ENCODE measurements at regions of chr2 and their contacts with region 1.

Region 1: GRCh38 chr2:195937176-195937575 is 131.5 kb downstream of the DNAH7 start:
- DNase-seq: no peak
- ATAC-seq: no peak
- H3K4me3 ChIP-seq: no peak overlapping the region
- H3K27ac ChIP-seq: no peak overlapping the region
- H3K4me1 ChIP-seq: no peaks in the 10 kb centered on the region
- H3K27me3 ChIP-seq: no peaks in the 10 kb centered on the region
- CTCF ChIP-seq: no peak
- POLR2A ChIP-seq: no peak
- RAD21 ChIP-seq: no peak

Region 2: GRCh38 chr2:195318440-195319111 is 618.6 kb before region 1 on chr2:
- CTCF ChIA-PET with region 1: no interaction called
- POLR2A ChIA-PET with region 1: no interaction called
- dilution Hi-C with region 1: no loop called
- in situ Hi-C with region 1: no loop called
- intact Hi-C with region 1: loop called (anchors 2 kb)
- DNase-seq: peak; percentile 37
- ATAC-seq: peak; percentile 52
- H3K4me3 ChIP-seq: no peak overlapping the region
- H3K27ac ChIP-seq: no peak overlapping the region
- H3K4me1 ChIP-seq: peaks cover 4% of the 10 kb centered on the region
- H3K27me3 ChIP-seq: no peaks in the 10 kb centered on the region
- CTCF ChIP-seq: peak; percentile 74
- POLR2A ChIP-seq: no peak
- RAD21 ChIP-seq: peak; percentile 75

Region 3: GRCh38 chr2:195664528-195664927 is 272.6 kb before region 1 on chr2:
- CTCF ChIA-PET with region 1: interaction called, 14 read pairs
- POLR2A ChIA-PET with region 1: interaction called, 3 read pairs
- dilution Hi-C with region 1: no loop called
- in situ Hi-C with region 1: no loop called
- intact Hi-C with region 1: loop called (anchors 1 kb)
- DNase-seq: peak; percentile 41
- ATAC-seq: no peak
- H3K4me3 ChIP-seq: no peak overlapping the region
- H3K27ac ChIP-seq: no peak overlapping the region
- H3K4me1 ChIP-seq: peaks cover 8% of the 10 kb centered on the region
- H3K27me3 ChIP-seq: no peaks in the 10 kb centered on the region
- CTCF ChIP-seq: peak; percentile 57
- POLR2A ChIP-seq: no peak
- RAD21 ChIP-seq: peak; percentile 59

Region 4: GRCh38 chr2:195672668-195673067 is 264.5 kb before region 1 on chr2:
- CTCF ChIA-PET with region 1: no interaction called
- POLR2A ChIA-PET with region 1: no interaction called
- dilution Hi-C with region 1: no loop called
- in situ Hi-C with region 1: loop called (anchors 5 kb)
- intact Hi-C with region 1: no loop called
- DNase-seq: no peak
- ATAC-seq: no peak
- H3K4me3 ChIP-seq: no peak overlapping the region
- H3K27ac ChIP-seq: no peak overlapping the region
- H3K4me1 ChIP-seq: peaks cover 9% of the 10 kb centered on the region
- H3K27me3 ChIP-seq: no peaks in the 10 kb centered on the region
- CTCF ChIP-seq: no peak
- POLR2A ChIP-seq: no peak
- RAD21 ChIP-seq: no peak